ENCODE measurements at regions of chr18 and their contacts with region 1.

Region 1: DNA sequence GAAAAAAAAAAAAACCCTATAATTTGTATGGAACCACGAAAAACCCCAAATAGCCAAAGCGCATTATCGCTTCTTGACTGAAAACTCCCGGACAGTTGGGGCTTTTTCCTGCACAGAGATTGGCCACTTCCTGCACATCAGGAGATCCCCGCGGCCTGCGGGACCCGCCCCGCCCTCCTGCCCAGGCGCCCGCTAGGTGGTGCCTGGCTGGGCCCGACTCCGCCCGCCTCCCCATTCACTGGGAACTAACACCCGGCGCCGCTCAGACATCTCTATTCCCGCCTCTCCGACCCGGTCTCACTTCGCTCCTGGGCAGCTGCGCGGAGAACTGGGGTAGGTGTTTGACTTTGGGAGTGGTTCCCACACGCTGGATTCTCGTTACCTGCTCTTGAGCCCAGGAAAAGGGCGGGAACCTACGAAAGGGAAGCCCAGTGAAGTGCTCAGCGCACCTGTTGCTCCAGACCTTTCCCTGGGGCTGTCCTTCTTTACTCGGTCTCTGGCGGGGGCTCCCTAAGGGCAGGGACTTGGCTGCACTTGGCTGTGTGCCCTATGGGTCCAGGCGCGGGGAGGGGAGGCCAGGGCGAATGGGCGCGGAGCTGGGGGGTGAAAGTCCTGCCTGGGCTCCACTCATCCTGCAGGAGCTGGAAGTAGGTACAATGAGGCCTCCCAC is at the start of gene HMSD:
- DNase-seq: peak; percentile 68
- H3K4me3 Mint-ChIP-seq: peak within 1 kb of the TSS; percentile 88
- H3K27ac Mint-ChIP-seq: peak within 1 kb of the TSS; percentile 87
- H3K4me1 Mint-ChIP-seq: peaks cover 46% of the 10 kb centered on the region
- H3K27me3 Mint-ChIP-seq: peaks cover 5% of the 10 kb centered on the region
- total RNA-seq, gene HMSD: 19.7 and 27.8 TPM in 2 replicates

Region 2: GRCh38 chr18:63832470-63832869 is 116.7 kb before region 1 on chr18:
- intact Hi-C with region 1: loop called (anchors 1 kb)
- DNase-seq: no peak
- H3K4me3 Mint-ChIP-seq: no peak overlapping the region
- H3K27ac Mint-ChIP-seq: no peak overlapping the region
- H3K4me1 Mint-ChIP-seq: peaks cover 13% of the 10 kb centered on the region
- H3K27me3 Mint-ChIP-seq: peaks cover 42% of the 10 kb centered on the region

Region 3: DNA sequence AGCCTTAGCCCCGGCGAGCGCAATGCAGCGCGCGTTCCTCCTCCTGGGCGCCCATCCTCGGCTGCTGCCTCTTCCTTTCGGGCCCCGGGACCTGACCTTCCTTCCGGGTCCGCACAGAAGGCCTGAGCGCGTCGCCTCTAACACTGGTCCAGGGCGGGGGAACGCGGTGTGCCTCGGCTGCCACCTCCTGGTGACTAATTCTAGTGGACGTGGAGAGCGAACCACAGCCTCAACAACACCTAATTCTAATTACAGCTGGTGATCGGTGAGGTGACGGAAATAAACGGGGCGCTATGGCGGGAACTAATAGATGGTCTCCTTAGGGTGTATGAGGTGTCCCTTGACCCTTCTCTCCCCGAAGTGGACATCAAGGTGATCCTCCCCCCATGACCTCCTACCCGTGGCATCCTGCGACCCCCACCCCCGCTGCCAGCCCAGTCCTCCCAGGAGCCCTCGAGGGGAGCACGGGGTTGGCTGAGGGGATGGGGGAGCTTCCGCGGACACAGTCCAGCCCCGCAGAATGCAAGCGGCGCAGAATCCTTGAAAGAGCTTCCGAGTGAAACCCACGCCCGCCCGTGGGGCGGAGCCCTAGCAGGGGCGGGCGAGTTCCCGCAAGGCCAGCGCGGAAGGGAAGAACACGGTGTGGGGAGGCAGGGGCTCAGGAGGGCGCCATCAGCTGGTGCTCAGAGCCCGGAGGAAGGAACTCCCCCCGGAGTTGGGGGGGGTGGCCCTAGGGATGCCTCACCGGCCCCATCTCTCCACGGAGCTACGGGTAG is 12.9 kb before region 1 on chr18:
- intact Hi-C with region 1: loop called (anchors 1 kb)
- DNase-seq: peak; percentile 55
- H3K4me3 Mint-ChIP-seq: peak overlapping the region; percentile 81
- H3K27ac Mint-ChIP-seq: peak overlapping the region; percentile 44
- H3K4me1 Mint-ChIP-seq: peaks cover 4% of the 10 kb centered on the region
- H3K27me3 Mint-ChIP-seq: peaks cover 25% of the 10 kb centered on the region

Region 4: DNA sequence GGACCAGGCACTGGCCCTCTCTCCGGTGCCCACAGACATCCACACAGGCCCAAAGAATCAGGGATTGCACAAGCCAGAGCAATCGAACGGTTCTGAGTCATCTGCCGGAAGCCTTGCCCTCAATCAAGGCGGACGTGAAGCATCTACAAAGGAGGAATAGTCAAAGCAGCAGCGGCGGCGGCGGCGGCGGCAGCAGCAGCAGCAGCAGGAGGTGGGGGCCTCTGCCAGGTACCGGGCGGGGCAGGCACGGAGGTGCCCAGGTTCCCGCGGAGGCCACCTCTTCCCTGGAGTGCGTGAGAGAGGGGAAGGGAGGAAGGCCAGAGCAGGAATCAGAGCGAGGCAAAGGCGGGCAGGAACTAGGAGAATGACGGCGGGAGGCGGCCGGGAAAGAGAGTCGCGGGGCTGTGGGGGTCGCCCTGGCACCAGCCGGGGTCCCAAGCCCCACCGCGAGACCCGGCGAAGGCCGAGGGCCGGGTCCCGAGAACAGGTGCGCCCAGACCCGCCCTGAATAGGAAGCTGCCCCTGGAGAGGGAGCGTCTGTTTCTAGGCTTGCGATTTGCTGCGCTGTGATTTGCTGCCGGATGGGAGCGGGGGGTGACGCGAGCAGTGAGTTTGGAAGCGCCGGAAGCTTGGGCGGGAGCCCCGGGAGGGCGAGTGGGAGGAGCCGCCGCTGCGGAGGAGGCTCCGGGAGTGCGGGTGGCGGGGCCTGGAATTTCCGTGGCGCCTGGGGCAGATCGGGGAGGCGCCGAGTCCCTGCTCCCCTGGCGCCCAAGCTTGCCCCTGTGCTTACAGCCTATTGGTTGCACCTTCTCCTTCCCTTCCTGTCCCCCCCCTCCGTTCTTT is 21.0 kb after region 1 on chr18 and contains the start of gene SERPINB8:
- intact Hi-C with region 1: loop called (anchors 1 kb)
- DNase-seq: peak; percentile 74
- H3K4me3 Mint-ChIP-seq: peak within 1 kb of the TSS; percentile 97
- H3K27ac Mint-ChIP-seq: peak within 1 kb of the TSS; percentile 98
- H3K4me1 Mint-ChIP-seq: peaks cover 54% of the 10 kb centered on the region
- H3K27me3 Mint-ChIP-seq: no peaks in the 10 kb centered on the region
- total RNA-seq, gene SERPINB8: 22.8 and 25.7 TPM in 2 replicates

Region 5: DNA sequence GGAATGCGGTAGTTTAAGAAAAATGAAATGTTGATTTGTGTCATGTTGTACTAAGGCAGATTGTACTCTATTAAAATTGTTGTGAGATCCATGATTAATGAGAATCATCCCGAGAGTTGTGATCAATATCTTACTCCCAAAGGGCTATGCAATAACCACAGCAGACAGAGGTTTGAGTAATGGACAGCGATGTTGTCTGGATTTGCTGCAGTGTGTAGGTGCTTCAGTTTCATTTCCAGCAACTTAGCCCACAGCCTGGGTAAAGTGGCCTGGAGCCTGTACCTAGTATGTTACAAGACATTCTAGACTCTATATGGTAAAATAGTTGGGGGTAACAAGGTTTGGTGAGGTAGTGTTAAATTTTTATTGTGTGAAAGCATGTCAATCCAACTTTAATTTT is 1007.3 kb after region 1 on chr18:
- intact Hi-C with region 1: no loop called
- DNase-seq: no peak
- H3K4me3 Mint-ChIP-seq: no peak overlapping the region
- H3K27ac Mint-ChIP-seq: no peak overlapping the region
- H3K4me1 Mint-ChIP-seq: no peaks in the 10 kb centered on the region
- H3K27me3 Mint-ChIP-seq: no peaks in the 10 kb centered on the region